SK-N-SH (cell line): ENCODE measurements at regions of chr12 and their contacts with region 1.

Region 1: DNA sequence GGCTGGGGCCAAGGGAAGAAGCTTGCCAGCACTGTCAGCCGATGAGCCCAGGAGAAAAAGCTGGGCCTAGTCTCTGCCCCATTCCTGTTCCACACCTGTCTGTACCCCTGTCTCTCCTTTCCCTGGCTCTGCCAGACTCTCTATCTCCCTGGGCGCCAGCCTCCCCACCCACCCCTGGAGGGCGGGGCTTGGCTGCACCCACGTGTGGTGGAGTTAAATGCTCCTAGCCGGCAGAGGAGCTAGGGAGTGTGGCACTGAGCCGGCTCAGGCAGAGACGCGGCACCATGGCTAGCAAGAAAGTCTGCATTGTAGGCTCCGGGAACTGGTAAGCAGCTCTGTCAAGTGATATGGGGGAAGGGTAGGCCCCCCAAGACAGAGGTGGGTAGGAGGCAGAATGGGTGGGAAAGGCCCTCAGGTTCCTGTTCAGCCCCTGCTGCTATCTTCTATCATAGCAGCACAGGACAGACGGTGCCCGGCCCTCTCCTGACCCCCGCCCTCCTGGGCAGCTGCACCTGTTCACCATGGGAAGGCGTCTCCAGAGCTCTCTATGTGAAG is at the start of gene GPD1:
- DNase-seq: peak; percentile 74
- H3K4me3 ChIP-seq: no peak within 1 kb of the TSS
- H3K27ac ChIP-seq: peak within 1 kb of the TSS in 1 of 2 experiments; percentile 36; a peak in 1 of 4 replicates
- H3K4me1 ChIP-seq: peaks cover 0 to 23% of the 10 kb centered on the region in 2 experiments; a peak in 1 of 4 replicates
- H3K27me3 ChIP-seq: no peaks in the 10 kb centered on the region
- CTCF ChIP-seq: no peak
- EP300 ChIP-seq: no peak
- RAD21 ChIP-seq: no peak
- polyA plus RNA-seq, gene GPD1: 0.07 and 0.26 TPM in 2 replicates

Region 2: GRCh38 chr12:50084775-50085614 is 18.8 kb before region 1 on chr12 and contains the start of gene SMARCD1:
- CTCF ChIA-PET with region 1: interaction called, 74 read pairs
- POLR2A ChIA-PET with region 1: interaction called, 11 read pairs
- DNase-seq: peak; percentile 98
- H3K4me3 ChIP-seq: peak within 1 kb of the TSS; percentile 77 to 79
- H3K27ac ChIP-seq: peak within 1 kb of the TSS; percentile 87 to 91
- H3K4me1 ChIP-seq: peaks cover 18 to 22% of the 10 kb centered on the region in 2 experiments
- H3K27me3 ChIP-seq: no peaks in the 10 kb centered on the region
- CTCF ChIP-seq: peak; percentile 67
- EP300 ChIP-seq: no peak
- RAD21 ChIP-seq: no peak
- polyA plus RNA-seq, gene SMARCD1: 58.5 and 77.2 TPM in 2 replicates

Region 3: DNA sequence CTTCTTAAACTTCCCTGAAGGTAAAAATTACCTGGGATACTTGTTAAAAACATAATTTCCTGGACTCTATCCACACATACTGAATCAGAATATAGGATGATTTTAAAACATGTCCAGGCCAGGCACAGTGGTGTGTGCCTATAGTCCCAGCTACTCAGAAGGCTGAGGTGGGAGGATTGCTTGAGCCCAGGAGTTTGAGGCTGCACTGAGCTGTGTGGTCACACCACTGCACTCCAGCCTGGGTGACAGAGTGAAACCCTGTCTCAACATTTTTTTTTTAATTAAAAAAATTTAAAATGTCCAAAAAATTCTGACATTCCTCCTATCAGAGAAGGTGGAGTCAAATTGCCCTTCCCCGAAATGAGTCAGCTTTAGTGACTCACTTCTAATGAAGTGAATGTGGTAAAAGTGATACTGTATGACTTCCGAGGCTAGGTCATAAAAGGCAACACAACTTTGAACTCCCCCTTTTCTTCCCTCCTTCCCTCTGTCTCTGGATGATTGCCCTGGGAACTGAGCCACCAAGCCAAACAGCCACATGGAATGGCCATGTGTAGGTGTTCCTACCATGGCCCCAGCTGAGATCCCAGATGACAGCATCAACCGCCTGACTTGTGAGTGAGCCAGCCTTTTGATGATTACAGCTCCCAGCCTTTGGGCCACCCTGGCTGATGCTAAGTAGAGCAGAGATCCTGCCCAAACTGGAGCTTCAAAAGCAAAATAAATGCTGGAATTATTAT is 143.2 kb after region 1 on chr12:
- CTCF ChIA-PET with region 1: no interaction called
- POLR2A ChIA-PET with region 1: no interaction called
- DNase-seq: no peak
- H3K4me3 ChIP-seq: no peak overlapping the region
- H3K27ac ChIP-seq: peak overlapping the region; percentile 50 to 92; a peak in 3 of 4 replicates
- H3K4me1 ChIP-seq: peaks cover 0 to 35% of the 10 kb centered on the region in 2 experiments
- H3K27me3 ChIP-seq: no peaks in the 10 kb centered on the region
- CTCF ChIP-seq: no peak
- EP300 ChIP-seq: peak in 1 of 2 experiments; percentile 90; a peak in 2 of 4 replicates
- RAD21 ChIP-seq: no peak

Region 4: DNA sequence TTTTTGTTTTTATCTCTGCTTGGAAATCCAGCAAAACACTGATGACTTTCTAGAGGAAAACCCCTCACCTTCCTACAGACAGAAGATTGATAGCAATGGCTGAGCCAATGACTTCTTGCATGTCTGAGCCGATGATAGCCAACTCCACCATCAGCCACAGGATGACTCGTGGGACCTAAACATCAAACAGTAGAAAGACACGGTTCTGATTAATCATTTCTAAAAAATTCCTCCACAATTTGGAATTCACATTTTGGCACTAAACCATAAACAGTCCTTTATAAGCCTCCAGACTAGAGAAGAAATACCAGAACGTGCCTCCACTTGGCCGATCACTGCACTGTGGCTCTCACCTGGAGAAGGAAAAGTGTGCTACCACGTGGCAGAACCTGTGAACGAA is 896.4 kb after region 1 on chr12:
- CTCF ChIA-PET with region 1: no interaction called
- POLR2A ChIA-PET with region 1: no interaction called
- DNase-seq: no peak
- H3K4me3 ChIP-seq: no peak overlapping the region
- H3K27ac ChIP-seq: no peak overlapping the region
- H3K4me1 ChIP-seq: no peaks in the 10 kb centered on the region
- H3K27me3 ChIP-seq: no peaks in the 10 kb centered on the region
- CTCF ChIP-seq: no peak
- EP300 ChIP-seq: no peak
- RAD21 ChIP-seq: no peak